ENCODE measurements at regions of chr5 and their contacts with region 1.

Region 1: DNA sequence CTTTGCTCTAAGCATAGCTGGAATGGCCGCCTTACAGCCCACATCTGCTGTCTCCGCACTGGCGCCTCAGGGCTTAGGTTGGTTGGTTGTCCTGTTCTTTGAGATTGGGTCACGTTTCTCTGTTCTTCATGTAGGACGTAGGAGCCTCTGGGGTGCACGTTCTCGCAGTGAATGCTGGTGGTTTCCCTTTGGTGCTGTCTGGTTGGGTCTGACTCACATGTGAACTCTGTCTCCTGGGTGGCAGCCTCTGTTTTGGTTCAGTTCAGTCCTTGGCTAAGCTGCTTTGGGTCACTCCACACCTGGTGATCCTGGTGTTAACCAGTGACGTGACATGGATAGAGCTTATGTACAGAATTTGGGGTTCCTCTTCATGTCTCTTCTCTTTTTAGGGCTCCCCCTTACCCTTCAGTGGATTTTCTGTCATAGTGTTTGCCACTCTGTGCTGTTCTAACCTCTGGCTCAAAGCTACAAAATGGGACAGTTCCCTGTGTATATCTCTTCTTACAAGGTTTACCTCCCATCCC is 12.6 kb upstream of the LPCAT1 start:
- DNase-seq: peak; percentile 87
- H3K4me3 Mint-ChIP-seq: peak overlapping the region; percentile 83
- H3K27ac Mint-ChIP-seq: peak overlapping the region; percentile 71
- H3K4me1 Mint-ChIP-seq: peaks cover 17% of the 10 kb centered on the region
- H3K27me3 Mint-ChIP-seq: peaks cover 28% of the 10 kb centered on the region

Region 2: DNA sequence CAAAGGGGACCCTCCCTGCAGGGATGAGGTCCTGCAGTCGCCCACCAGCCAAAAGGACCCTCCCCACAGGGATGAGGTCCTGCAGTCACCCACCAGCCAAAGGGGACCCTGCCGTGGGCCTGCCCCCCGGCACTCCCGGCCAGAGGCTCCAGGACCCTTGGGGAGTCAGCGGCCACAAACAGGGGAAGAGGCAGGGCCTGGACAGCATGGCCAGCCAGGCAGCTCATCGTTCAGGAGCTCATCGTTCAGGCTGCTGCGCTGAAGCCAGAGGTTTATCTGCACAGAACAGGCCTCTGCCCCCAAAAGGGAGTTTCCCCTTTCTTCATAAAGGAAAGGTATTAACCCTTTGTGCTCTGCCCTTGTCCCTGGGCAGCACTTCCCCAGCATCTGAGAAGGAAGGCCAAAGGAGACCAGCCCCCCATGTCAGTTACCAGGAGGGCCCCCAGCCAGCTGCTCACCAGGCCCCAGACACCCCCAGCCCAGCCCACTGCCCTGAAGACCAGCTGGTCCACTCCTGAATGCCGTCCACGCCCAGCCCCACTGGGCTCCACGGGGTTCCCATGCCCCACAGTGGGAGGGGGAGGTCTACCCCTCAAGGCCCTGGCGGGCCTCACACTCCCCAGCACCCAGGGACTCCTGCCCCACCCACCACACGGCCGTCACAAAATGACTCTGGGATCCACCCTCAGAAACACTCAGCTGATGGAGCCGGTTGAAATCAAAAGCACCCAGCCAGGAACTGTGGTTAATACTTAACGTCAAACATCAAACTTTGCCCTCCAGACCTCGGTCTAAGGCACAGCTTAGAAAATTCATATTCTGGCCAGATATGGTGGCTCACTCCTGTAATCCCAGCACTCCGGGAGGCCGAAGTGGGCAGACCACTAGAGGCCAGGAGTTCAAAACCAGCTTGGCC is 430.8 kb before region 1 on chr5:
- intact Hi-C with region 1: loop called (anchors 10 kb)
- DNase-seq: peak; percentile 94
- H3K4me3 Mint-ChIP-seq: peak overlapping the region; percentile 82
- H3K27ac Mint-ChIP-seq: peak overlapping the region; percentile 83
- H3K4me1 Mint-ChIP-seq: peaks cover 62% of the 10 kb centered on the region
- H3K27me3 Mint-ChIP-seq: no peaks in the 10 kb centered on the region

Region 3: GRCh38 chr5:1385395-1386273 is 150.8 kb before region 1 on chr5:
- intact Hi-C with region 1: loop called (anchors 2 kb)
- DNase-seq: peak; percentile 97
- H3K4me3 Mint-ChIP-seq: peak overlapping the region; percentile 97
- H3K27ac Mint-ChIP-seq: peak overlapping the region; percentile 97
- H3K4me1 Mint-ChIP-seq: peaks cover 14% of the 10 kb centered on the region
- H3K27me3 Mint-ChIP-seq: peaks cover 21% of the 10 kb centered on the region

Region 4: DNA sequence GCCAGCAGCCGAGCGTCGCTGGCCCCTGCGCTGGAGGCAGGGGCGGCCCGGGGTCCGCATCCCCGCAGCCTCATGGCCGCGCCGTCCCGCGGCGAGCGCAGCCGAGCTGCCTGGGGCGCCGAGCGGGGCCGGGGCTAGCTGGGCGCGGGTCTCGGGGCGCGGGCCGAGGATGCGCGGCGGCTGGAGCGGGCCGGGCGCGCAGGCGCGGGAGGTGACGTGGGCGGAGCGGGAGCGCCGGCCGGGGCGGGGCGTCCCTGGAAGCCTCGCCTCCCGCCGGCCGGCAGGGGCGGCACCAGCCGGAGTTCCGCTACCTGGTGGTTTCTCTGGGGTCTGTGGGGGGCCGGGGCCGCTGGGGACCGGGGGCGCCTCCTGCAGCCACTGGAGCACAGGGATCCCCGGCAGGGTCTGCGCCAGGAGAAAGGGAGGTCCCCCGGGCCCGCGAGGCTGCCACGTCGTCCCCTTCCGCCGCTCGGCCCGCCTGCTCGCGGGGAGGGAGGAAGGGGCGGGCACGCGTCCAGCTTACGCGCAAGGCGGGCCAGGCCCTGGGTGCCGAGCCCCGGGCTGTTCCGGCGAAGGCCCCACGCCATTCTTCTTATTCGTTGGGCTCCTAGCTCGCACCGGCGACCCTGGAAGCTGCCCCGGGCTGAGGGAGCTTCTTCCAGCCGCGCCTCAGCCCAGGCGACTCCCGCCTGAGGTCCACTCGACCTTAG is 12.5 kb before region 1 on chr5 and contains the start of gene LPCAT1:
- intact Hi-C with region 1: loop called (anchors 1 kb)
- DNase-seq: peak; percentile 95
- H3K4me3 Mint-ChIP-seq: peak within 1 kb of the TSS; percentile 89
- H3K27ac Mint-ChIP-seq: peak within 1 kb of the TSS; percentile 70
- H3K4me1 Mint-ChIP-seq: peaks cover 18% of the 10 kb centered on the region
- H3K27me3 Mint-ChIP-seq: peaks cover 5% of the 10 kb centered on the region
- total RNA-seq, gene LPCAT1: 93.2 and 95.6 TPM in 2 replicates

Region 5: DNA sequence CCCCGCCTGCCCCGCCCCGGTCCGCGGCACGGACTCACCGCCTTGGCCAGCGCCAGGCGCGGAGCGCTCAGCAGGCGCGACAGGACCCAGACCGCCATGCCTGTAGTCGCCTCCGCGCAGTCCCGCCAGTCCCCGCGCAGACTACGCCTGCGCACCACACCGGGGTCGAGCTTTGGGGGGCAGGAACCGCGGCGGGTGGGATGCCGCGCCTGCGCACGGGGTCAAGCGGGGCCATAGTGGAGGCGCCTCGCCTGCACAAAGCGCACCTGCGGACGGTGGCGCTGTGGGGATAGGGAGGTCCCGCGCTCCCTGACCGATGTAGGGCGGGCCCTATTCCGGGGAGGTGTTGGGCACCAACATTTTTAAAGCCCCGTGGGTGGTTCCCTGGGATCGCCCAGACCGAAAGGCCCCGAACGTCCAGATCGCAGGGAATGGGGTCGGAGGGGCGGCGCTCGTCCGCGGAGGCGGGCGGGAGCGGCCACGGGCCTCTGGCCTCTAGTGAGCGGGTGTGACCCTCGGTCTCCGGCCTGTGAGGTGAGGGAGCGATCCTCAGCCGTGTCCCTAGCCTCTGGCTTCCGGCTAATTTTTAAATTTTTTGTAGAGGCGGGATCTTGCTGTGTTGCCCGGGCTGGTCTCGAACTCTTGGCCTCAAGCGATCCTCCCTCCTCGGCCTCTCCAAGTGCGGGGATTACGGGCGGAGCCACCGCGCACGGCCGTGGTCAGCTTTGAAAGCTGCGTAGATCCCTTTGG is 58.1 kb after region 1 on chr5:
- intact Hi-C with region 1: loop called (anchors 10 kb)
- DNase-seq: peak; percentile 86
- H3K4me3 Mint-ChIP-seq: peak overlapping the region; percentile 81
- H3K27ac Mint-ChIP-seq: peak overlapping the region; percentile 45
- H3K4me1 Mint-ChIP-seq: peaks cover 5% of the 10 kb centered on the region
- H3K27me3 Mint-ChIP-seq: peaks cover 1% of the 10 kb centered on the region

Region 6: GRCh38 chr5:2093859-2094615 is 557.7 kb after region 1 on chr5:
- intact Hi-C with region 1: no loop called
- DNase-seq: peak; percentile 43
- H3K4me3 Mint-ChIP-seq: no peak overlapping the region
- H3K27ac Mint-ChIP-seq: no peak overlapping the region
- H3K4me1 Mint-ChIP-seq: no peaks in the 10 kb centered on the region
- H3K27me3 Mint-ChIP-seq: peaks cover 3% of the 10 kb centered on the region

Region 7: DNA sequence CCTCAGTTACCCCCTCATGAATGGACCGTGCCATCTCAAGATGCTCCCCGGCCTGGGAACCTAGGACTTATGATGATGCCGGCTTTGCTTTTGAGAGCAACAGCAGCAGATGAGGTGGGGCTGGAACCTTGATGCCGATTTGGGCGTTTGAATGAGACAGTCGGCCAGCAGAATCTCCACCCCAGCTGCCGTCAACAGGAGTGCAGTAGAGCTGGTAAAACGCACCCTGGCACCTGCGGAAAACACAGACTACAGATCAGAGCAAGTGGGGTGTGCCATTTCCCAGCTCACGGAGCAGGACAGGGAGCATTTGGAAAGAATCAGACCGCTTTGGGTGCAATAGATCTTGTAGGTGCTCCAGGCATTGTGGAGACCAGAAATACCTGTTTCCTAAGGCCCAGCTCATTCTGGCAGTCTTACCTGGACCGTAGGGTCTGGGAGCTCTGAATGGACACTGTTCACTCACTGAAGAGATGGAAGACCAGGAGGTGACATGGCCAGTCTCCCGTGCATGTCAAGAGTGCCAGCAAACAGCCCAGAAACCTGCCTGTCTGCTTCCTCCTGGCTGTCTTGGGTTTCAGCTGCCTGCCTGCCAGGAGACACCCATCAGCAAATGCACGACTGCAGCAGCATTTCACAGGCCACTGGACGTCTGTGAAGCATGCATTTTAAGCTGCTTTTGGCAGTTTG is 664.0 kb after region 1 on chr5:
- intact Hi-C with region 1: no loop called
- DNase-seq: no peak
- H3K4me3 Mint-ChIP-seq: no peak overlapping the region
- H3K27ac Mint-ChIP-seq: no peak overlapping the region
- H3K4me1 Mint-ChIP-seq: no peaks in the 10 kb centered on the region
- H3K27me3 Mint-ChIP-seq: no peaks in the 10 kb centered on the region

Region 8: GRCh38 chr5:3509289-3509688 is 1972.9 kb after region 1 on chr5:
- intact Hi-C with region 1: no loop called
- DNase-seq: peak; percentile 24
- H3K4me3 Mint-ChIP-seq: no peak overlapping the region
- H3K27ac Mint-ChIP-seq: no peak overlapping the region
- H3K4me1 Mint-ChIP-seq: no peaks in the 10 kb centered on the region
- H3K27me3 Mint-ChIP-seq: no peaks in the 10 kb centered on the region